Activated CD4-positive, alpha-beta T cell treated with anti-CD3 and anti-CD28 coated beads for 36 hours (primary cell): ENCODE measurements at regions of chr6 and their contacts with region 1.

Region 1: DNA sequence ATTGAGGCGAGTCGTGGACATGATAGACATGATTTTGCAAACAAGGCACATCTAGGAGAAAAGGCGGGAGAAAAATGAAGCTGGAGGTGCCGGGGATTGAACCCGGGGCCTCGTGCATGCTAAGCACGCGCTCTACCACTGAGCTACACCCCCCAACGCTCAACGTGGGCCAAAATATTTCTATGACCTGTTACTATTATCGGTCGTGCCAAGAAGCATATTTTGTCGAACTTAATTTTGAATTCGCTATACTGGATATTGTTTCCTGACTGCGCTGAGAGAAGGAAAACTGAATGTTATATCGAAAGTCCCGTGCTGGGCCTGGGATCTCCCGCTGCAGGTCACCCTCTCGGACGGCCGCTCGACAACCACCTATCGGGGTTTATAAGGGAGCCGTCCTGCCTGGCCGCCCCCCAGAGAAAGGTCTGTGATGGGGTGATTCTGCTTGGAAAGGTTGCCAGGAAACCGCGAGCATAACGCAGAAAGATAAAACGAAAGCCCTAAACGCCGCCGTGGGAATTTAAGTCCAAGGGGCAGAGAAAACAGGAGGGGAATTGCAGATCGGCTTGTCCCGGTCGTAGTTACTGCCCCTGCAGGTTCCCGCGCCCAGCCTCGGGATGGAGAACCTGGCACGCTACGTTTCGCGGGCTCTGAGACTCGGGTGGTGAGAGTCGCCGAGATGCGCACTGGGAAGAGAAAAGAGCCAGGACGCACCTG is 60.0 kb downstream of the TRIM27 start:
- DNase-seq: peak; percentile 88
- ATAC-seq: peak; percentile 45
- H3K4me3 Mint-ChIP-seq: peak overlapping the region; percentile 74
- H3K27ac Mint-ChIP-seq: peak overlapping the region; percentile 78
- H3K4me1 Mint-ChIP-seq: peaks cover 36% of the 10 kb centered on the region
- H3K27me3 Mint-ChIP-seq: peaks cover 1% of the 10 kb centered on the region

Region 2: GRCh38 chr6:27126815-27127537 is 1736.8 kb before region 1 on chr6:
- CTCF ChIA-PET with region 1: no interaction called
- POLR2A ChIA-PET with region 1: interaction called, 10 read pairs
- intact Hi-C with region 1: loop called in 1 of 2 experiments (anchors 10 kb)
- DNase-seq: peak; percentile 89
- ATAC-seq: peak; percentile 74
- H3K4me3 Mint-ChIP-seq: peak overlapping the region; percentile 68
- H3K27ac Mint-ChIP-seq: peak overlapping the region; percentile 67
- H3K4me1 Mint-ChIP-seq: peaks cover 20% of the 10 kb centered on the region
- H3K27me3 Mint-ChIP-seq: no peaks in the 10 kb centered on the region

Region 3: DNA sequence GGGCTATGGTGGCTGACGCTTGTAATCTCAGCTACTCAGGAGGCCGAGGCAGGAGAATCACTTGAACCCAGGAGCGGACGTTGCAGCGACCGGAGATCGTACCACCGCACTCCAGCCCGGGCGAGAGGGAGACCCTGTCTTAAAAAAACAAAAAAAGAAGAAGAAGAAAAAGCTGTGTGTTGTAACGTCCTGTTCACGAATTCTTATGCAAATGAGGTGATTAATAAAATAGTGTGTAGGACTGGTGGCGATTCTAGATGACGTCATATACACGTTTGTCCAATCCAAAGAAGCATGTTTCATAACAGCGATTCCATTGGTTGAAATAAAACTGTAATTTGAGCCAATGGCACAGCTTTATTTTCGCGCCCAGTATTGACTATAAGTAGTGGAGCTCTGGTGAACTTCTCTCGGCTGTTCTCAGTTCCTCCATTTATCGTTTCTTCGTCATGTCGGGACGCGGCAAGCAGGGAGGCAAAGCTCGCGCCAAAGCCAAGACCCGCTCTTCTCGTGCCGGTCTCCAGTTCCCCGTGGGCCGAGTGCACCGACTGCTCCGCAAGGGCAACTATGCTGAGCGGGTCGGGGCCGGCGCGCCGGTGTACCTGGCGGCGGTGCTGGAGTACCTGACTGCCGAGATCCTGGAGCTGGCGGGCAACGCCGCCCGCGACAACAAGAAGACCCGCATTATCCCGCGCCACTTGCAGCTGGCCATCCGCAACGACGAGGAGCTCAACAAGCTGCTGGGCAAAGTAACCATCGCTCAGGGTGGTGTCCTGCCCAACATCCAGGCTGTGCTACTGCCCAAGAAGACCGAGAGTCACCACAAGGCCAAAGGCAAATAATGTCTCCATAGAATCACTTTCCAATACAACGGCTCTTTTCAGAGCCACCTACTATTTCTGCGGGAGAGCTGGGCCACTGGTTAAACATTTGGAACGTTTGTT is 998.6 kb before region 1 on chr6:
- CTCF ChIA-PET with region 1: no interaction called
- POLR2A ChIA-PET with region 1: interaction called, 6 read pairs
- intact Hi-C with region 1: loop called in 1 of 2 experiments (anchors 10 kb)
- DNase-seq: peak; percentile 86
- ATAC-seq: peak; percentile 57
- H3K4me3 Mint-ChIP-seq: peak overlapping the region; percentile 94
- H3K27ac Mint-ChIP-seq: peak overlapping the region; percentile 99
- H3K4me1 Mint-ChIP-seq: peaks cover 40% of the 10 kb centered on the region
- H3K27me3 Mint-ChIP-seq: no peaks in the 10 kb centered on the region

Region 4: DNA sequence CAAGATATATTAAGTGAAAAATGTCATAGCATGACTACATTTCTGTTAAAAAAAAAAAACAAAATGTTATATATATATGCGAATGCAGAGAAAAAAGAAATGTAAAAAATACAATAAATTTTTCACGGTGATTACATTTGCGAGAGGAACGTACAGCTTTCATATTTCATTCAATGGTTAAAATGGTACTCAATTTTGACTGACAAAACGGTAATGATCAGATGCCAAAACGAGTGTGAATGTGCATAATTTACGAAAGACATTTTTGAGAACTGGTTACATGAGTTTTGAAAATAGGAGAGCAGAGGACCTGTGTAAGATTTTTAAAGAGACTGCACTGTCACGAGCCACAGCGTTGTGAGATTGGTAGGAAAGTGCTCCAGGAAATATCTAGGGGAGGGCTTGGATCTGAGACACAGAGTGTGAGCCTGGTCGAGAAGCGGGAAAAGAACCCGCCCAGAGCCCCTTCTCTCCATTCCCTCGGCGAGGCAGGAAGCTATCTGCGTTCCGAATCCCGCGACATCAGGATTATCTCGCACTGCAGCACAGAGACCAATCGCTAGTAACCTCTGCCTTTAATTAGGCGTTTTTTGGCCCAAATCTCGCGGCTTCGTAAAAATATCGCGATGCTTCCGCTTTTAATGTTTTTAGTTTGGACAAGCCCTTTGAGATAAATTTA is 31.5 kb after region 1 on chr6:
- CTCF ChIA-PET with region 1: interaction called, 7 read pairs
- POLR2A ChIA-PET with region 1: interaction called, 22 read pairs
- intact Hi-C with region 1: loop called (anchors 1 kb)
- DNase-seq: peak; percentile 94
- ATAC-seq: peak; percentile 82
- H3K4me3 Mint-ChIP-seq: peak overlapping the region; percentile 98
- H3K27ac Mint-ChIP-seq: peak overlapping the region; percentile 99
- H3K4me1 Mint-ChIP-seq: peaks cover 9% of the 10 kb centered on the region
- H3K27me3 Mint-ChIP-seq: no peaks in the 10 kb centered on the region

Region 5: DNA sequence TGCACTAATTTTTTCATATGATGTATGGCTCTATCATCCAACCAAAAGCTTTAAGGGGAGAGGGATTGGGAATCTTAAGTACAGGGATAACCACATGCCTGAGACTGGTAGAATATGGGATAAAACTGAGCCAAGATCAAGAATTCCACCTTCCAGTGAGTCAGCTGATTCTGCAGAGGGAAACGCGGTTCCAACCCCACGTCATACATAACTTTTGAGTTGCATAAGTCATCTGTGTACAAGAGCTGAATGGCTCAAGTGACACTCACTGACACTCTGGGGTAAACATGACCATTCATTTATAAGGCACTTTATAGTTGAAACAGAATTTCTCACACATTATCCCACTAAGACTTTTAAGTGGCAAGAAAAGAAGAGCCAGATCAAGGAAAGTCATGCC is 43.6 kb after region 1 on chr6:
- CTCF ChIA-PET with region 1: no interaction called
- POLR2A ChIA-PET with region 1: no interaction called
- intact Hi-C with region 1: no loop called
- DNase-seq: no peak
- ATAC-seq: no peak
- H3K4me3 Mint-ChIP-seq: no peak overlapping the region
- H3K27ac Mint-ChIP-seq: no peak overlapping the region
- H3K4me1 Mint-ChIP-seq: no peaks in the 10 kb centered on the region
- H3K27me3 Mint-ChIP-seq: no peaks in the 10 kb centered on the region

Region 6: DNA sequence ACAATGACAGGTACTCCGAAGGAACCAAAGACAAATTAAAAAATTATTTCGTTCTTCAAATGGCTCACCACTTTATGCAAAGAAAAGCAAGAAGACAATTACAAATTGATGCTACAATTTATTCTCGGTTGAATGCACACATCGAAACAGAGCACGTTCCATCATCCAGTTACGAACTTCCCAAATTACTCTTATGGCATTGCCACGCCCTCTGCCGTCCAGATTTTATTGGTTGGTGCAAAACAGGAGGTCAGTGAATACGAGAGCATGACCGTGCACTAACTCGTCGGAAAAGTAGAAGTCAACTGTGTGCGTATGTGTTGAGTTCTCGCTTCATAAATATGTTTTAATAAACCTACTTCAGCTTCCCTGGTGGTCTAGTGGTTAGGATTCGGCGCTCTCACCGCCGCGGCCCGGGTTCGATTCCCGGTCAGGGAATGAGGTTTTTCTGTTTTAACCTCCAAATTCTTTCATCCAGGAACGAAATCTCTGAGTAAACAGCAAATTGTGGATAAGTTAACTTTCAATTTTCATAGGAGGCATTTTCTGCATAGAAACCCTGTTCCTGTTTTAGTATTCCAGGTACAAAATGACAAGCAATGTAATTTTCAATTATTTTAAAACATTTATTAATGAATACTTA is 118.2 kb after region 1 on chr6:
- CTCF ChIA-PET with region 1: interaction called, 9 read pairs
- POLR2A ChIA-PET with region 1: no interaction called
- intact Hi-C with region 1: loop called in 1 of 2 experiments (anchors 1 kb)
- DNase-seq: peak; percentile 82
- ATAC-seq: peak; percentile 42
- H3K4me3 Mint-ChIP-seq: peak overlapping the region; percentile 86
- H3K27ac Mint-ChIP-seq: peak overlapping the region; percentile 79
- H3K4me1 Mint-ChIP-seq: peaks cover 42% of the 10 kb centered on the region
- H3K27me3 Mint-ChIP-seq: peaks cover 47% of the 10 kb centered on the region